ENCODE measurements at regions of chr1 and their contacts with region 1.

Region 1: DNA sequence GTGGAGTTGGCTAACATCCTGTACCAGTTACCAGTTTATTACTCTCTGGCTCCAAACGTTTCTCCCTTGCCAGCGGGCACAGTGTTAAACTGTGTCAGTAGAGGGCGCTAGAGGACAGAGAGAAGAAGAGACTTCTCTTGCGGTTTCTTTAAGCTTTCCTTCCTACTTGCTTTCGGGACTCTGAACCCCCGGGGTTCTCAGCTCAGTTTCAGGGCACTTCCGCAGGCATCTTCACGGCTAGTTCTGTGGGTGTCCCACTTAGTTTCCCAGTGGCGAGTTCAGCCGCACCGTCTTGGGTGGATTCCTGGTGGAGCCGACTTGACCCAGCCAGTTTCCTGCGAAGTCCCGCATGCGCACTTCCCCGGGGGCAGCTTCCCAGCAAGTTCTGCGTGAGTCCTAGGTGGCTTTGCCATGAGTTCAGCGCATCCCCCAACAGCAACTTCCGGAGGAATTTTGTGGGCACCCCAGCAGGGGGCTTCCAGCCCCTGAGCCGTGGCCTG is 37.9 kb upstream of the BTG2 start:
- DNase-seq: peak; percentile 95
- H3K4me3 ChIP-seq: peak overlapping the region; percentile 55 to 89 (median 89)
- H3K27ac ChIP-seq: no peak overlapping the region
- H3K4me1 ChIP-seq: peaks cover 4% of the 10 kb centered on the region
- H3K27me3 ChIP-seq: no peaks in the 10 kb centered on the region
- CTCF ChIP-seq: peak; percentile 84 to 88
- POLR2A ChIP-seq: peak; percentile 46

Region 2: DNA sequence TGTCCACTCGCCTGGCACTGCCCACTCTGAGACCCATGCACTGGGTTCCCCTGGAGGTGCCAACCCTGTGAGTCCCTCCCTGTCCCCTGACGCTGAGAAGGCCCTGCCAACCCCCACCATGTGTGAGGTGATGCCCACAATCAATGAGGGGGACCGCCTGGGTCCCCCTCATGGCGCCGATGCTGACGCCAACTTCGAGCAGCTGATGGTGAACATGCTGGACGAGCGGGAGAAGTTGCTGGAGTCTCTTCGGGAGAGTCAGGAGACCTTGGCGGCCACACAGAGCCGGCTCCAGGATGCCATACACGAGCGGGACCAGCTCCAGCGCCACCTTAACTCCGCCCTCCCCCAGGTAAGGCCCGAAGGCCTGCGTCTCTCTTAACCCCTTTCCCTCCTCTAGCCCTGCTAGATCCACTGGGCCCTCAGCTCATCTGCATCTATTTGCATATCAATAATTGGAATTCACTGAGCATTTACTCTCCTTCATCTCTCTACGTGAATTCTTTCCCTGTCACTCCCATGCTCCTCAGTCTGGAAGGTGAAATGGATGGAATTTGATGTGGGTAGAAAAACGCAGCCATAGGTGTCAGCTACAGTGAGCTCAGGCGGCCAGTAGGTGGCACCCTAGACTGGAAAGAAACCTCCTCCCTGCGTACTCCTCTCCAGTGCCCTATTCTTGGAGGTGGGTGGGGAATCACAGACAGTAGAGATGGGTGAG is 228.3 kb before region 1 on chr1:
- CTCF ChIA-PET with region 1: interaction called, 207 read pairs
- POLR2A ChIA-PET with region 1: no interaction called
- dilution Hi-C with region 1: no loop called
- intact Hi-C with region 1: loop called (anchors 1 kb)
- DNase-seq: peak; percentile 57
- H3K4me3 ChIP-seq: no peak overlapping the region
- H3K27ac ChIP-seq: no peak overlapping the region
- H3K4me1 ChIP-seq: no peaks in the 10 kb centered on the region
- H3K27me3 ChIP-seq: peaks cover 0 to 18% of the 10 kb centered on the region in 2 experiments
- CTCF ChIP-seq: peak; percentile 86
- POLR2A ChIP-seq: no peak

Region 3: GRCh38 chr1:203216274-203217138 is 50.9 kb before region 1 on chr1:
- CTCF ChIA-PET with region 1: interaction called, 39 read pairs
- POLR2A ChIA-PET with region 1: no interaction called
- dilution Hi-C with region 1: no loop called
- intact Hi-C with region 1: no loop called
- DNase-seq: peak; percentile 74
- H3K4me3 ChIP-seq: no peak overlapping the region
- H3K27ac ChIP-seq: no peak overlapping the region
- H3K4me1 ChIP-seq: no peaks in the 10 kb centered on the region
- H3K27me3 ChIP-seq: peaks cover 1 to 6% of the 10 kb centered on the region in 2 experiments
- CTCF ChIP-seq: peak; percentile 61 to 68
- POLR2A ChIP-seq: no peak

Region 4: GRCh38 chr1:203326830-203327683 is 59.7 kb after region 1 on chr1:
- CTCF ChIA-PET with region 1: interaction called, 1,014 read pairs
- POLR2A ChIA-PET with region 1: no interaction called
- dilution Hi-C with region 1: no loop called
- intact Hi-C with region 1: loop called (anchors 1 kb)
- DNase-seq: peak; percentile 94
- H3K4me3 ChIP-seq: peak overlapping the region; percentile 19 to 52 (median 39)
- H3K27ac ChIP-seq: no peak overlapping the region
- H3K4me1 ChIP-seq: peaks cover 19% of the 10 kb centered on the region
- H3K27me3 ChIP-seq: peaks cover 8 to 23% of the 10 kb centered on the region in 2 experiments
- CTCF ChIP-seq: no peak
- POLR2A ChIP-seq: peak; percentile 8

Region 5: GRCh38 chr1:203440771-203441170 is 173.4 kb after region 1 on chr1:
- CTCF ChIA-PET with region 1: interaction called, 37 read pairs
- POLR2A ChIA-PET with region 1: no interaction called
- dilution Hi-C with region 1: no loop called
- intact Hi-C with region 1: loop called (anchors 2 kb)
- DNase-seq: peak; percentile 65
- H3K4me3 ChIP-seq: no peak overlapping the region
- H3K27ac ChIP-seq: no peak overlapping the region
- H3K4me1 ChIP-seq: peaks cover 5% of the 10 kb centered on the region
- H3K27me3 ChIP-seq: peaks cover 20 to 39% of the 10 kb centered on the region in 2 experiments
- CTCF ChIP-seq: peak; percentile 27 to 62
- POLR2A ChIP-seq: no peak

Region 6: DNA sequence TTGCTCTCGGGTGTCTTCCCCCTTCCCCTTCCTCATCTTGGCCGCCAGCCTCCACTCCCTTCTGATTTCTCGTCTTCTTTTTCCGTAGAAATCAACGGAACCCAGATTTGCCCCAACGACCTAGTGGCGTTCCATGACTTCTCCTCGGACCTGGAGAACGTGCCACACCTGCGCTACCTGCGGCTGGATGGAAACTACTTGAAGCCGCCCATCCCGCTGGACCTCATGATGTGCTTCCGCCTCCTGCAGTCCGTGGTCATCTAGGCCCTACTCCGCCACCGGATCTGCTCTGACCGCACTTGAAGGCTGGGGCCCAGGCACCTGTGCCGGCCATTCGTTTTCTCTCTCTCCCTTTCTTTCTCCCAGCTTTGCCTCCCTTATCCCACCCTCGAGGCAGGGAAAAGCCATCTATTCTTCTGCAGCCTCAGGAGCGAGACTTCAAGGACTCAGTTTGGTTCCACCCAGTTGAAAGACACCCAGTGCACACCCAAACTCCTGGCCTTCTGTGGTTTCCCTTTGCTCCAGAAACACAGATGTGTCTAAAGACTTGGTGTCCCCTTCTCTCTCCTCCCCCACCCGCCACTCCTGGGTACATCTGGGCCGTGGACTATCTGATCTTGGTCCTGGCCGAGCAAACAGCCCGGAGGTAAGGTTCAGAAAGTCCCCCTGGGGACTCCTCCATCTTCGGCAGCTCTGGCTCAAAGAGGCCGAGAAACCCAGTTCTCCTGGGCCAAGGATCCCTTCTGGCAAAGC is 219.4 kb after region 1 on chr1:
- CTCF ChIA-PET with region 1: interaction called, 51 read pairs
- POLR2A ChIA-PET with region 1: no interaction called
- dilution Hi-C with region 1: no loop called
- intact Hi-C with region 1: loop called (anchors 1 kb)
- DNase-seq: no peak
- H3K4me3 ChIP-seq: peak overlapping the region in 2 of 3 experiments; percentile 37 to 38
- H3K27ac ChIP-seq: peak overlapping the region; percentile 52
- H3K4me1 ChIP-seq: no peaks in the 10 kb centered on the region
- H3K27me3 ChIP-seq: peaks cover 5 to 8% of the 10 kb centered on the region in 2 experiments
- CTCF ChIP-seq: no peak
- POLR2A ChIP-seq: no peak